GM12878 (cell line): ENCODE measurements at regions of chr13 and their contacts with region 1.

Region 1: DNA sequence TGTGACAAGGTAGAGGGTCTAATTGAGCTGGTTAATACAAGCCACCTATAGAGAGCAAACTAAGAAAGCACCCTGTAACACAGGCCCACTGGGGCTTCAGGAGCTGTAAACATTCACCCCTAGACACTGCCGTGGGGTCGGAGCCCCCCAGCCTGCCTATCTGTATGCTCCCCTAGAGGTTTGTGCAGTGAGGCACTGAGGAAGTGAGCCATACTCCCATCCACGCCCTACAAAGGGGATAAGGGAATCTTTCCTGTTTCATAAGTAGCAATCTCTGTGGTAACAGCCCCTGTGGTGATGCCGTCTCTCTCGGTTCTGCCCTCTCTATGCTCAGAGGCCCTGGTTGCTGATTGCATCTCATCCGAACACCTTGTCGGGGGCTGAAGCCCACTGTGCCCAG is 94.2 kb upstream of the GJB6 start:
- DNase-seq: no peak
- ATAC-seq: no peak
- H3K4me3 ChIP-seq: no peak overlapping the region
- H3K27ac ChIP-seq: no peak overlapping the region
- H3K4me1 ChIP-seq: no peaks in the 10 kb centered on the region
- H3K27me3 ChIP-seq: no peaks in the 10 kb centered on the region; a peak in 1 of 4 replicates
- CTCF ChIP-seq: no peak
- EP300 ChIP-seq: no peak
- POLR2A ChIP-seq: no peak
- RAD21 ChIP-seq: no peak

Region 2: DNA sequence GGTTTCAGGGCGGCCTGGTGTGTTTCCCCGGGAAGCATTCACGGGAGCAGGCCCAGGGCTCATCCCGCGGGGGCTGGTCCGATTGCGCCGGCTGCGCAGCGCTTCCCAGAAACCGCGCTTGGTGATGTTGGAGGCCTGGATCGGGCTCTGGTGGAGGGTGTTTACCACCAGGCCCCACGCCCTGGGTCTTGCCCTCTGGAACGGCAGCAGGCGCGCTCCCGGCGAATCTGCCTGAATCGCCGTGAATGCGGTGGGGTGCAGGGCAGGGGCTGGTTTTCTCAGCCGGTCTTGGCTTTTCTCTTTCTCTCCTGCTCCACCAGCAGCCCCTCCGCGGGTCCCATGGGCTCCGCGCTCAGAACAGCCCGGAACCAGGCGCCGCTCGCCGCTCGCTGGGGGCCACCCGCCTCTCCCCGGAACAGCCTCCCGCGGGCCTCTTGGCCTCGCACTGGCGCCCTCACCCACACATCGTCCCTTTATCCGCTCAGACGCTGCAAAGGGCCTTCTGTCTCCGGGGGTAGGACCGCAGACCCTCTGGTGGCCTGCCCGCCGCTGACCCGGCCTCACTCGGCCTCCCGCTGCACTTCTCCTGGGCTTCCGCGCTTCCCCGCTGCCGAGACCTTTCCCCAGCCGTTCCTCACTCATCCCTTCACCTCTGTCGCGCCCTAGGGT is 24.7 kb before region 1 on chr13:
- CTCF ChIA-PET with region 1: no interaction called
- POLR2A ChIA-PET with region 1: no interaction called
- RAD21 ChIA-PET with region 1: no interaction called
- SMC1A ChIA-PET with region 1: no interaction called
- in situ Hi-C with region 1: no loop called
- intact Hi-C with region 1: no loop called
- DNase-seq: no peak
- ATAC-seq: no peak
- H3K4me3 ChIP-seq: no peak overlapping the region
- H3K27ac ChIP-seq: no peak overlapping the region
- H3K4me1 ChIP-seq: no peaks in the 10 kb centered on the region
- H3K27me3 ChIP-seq: peaks cover 0 to 3% of the 10 kb centered on the region in 2 experiments; a peak in 2 of 4 replicates
- CTCF ChIP-seq: no peak
- EP300 ChIP-seq: no peak
- POLR2A ChIP-seq: no peak
- RAD21 ChIP-seq: no peak

Region 3: DNA sequence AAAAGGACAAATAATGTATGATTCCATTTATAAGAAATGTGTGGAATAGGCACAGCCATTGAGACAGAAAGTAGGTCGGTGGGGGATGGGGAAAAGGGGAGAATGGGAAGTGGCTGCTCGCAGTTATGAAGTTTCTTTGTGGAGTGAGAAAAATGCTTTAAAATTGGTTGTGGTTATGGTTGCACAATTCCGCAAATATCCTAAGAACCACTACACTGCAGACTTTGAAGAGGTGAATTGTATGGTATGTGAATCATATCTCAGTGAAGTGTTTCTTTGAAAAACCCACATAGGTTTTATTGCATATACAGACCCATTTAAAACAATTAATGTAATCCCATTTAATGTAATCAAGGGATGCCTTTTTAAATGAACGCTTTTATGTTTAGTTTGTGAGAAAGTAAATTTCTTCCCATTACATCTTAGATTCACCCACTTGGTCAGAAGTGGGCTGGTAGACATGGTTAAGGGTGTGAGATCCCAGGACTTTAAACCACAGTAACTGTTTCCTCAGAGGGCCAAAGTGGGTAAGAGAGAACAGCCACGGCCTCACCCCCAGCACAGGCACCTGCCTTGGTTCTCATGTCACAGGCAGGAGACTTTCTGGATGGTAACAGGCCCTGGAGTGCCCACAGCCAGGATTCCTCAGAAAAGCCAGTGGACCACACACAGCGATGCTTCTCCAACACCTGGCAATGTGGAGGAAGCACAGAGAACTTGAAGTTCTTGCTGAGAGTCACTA is 25.2 kb after region 1 on chr13:
- CTCF ChIA-PET with region 1: no interaction called
- POLR2A ChIA-PET with region 1: no interaction called
- RAD21 ChIA-PET with region 1: no interaction called
- SMC1A ChIA-PET with region 1: no interaction called
- in situ Hi-C with region 1: no loop called
- intact Hi-C with region 1: no loop called
- DNase-seq: no peak
- ATAC-seq: no peak
- H3K4me3 ChIP-seq: no peak overlapping the region
- H3K27ac ChIP-seq: no peak overlapping the region
- H3K4me1 ChIP-seq: no peaks in the 10 kb centered on the region
- H3K27me3 ChIP-seq: no peaks in the 10 kb centered on the region
- CTCF ChIP-seq: no peak
- EP300 ChIP-seq: no peak
- POLR2A ChIP-seq: no peak
- RAD21 ChIP-seq: no peak

Region 4: DNA sequence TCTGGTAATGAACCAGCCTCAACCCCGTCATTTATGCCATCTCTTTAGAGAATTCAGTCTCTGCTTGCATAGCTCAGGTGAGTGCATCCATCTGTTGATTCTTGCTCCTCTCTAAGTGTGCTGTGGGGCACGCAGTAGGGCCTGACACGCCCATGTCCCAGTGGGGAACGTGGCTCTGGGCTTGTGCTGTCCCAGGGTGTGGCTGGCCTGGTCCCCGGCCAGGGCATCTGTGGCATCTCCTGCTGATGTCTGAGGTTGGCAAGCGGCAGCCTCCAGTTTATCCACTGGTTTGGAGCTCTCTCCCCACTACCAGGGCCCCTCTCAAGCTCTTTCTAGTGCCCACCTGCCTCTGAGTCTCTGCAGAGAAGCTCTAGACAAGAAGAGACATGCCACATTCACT is 52.4 kb after region 1 on chr13:
- CTCF ChIA-PET with region 1: no interaction called
- POLR2A ChIA-PET with region 1: no interaction called
- RAD21 ChIA-PET with region 1: no interaction called
- SMC1A ChIA-PET with region 1: no interaction called
- in situ Hi-C with region 1: loop called (anchors 5 kb)
- intact Hi-C with region 1: no loop called
- DNase-seq: no peak
- ATAC-seq: no peak
- H3K4me3 ChIP-seq: no peak overlapping the region
- H3K27ac ChIP-seq: no peak overlapping the region
- H3K4me1 ChIP-seq: no peaks in the 10 kb centered on the region
- H3K27me3 ChIP-seq: no peaks in the 10 kb centered on the region
- CTCF ChIP-seq: no peak
- EP300 ChIP-seq: no peak
- POLR2A ChIP-seq: no peak
- RAD21 ChIP-seq: no peak